ENCODE measurements at regions of chr1 and their contacts with region 1.

Region 1: DNA sequence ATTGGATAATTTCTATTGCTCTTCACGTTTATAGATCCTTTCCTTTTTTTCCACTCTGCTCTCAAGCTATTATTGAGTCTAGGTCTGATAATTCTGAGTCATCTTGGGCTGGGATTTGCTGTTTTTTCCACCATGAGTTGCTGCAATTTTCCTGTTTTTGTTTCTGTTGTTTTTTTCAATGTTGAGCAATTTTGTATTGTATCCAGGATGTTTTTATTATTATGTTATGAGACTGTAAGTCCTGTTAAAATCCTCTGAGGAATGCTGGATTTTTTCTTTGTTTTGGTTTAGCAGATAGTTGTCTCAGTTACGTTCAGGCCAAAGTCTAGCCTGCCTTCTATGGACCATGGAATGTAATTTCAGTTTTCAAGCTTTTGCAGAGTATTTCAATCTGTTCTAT is 13.0 kb upstream of the SLC35A3 start:
- DNase-seq: no peak
- H3K4me3 ChIP-seq: no peak overlapping the region
- H3K4me3 Mint-ChIP-seq: no peak overlapping the region
- H3K27ac ChIP-seq: no peak overlapping the region
- H3K27ac Mint-ChIP-seq: no peak overlapping the region
- H3K4me1 ChIP-seq: no peaks in the 10 kb centered on the region
- H3K4me1 Mint-ChIP-seq: no peaks in the 10 kb centered on the region
- H3K27me3 ChIP-seq: no peaks in the 10 kb centered on the region
- H3K27me3 Mint-ChIP-seq: peaks cover 0 to 1% of the 10 kb centered on the region in 2 donors

Region 2: GRCh38 chr1:99855914-99856450 is 100.8 kb before region 1 on chr1:
- CTCF ChIA-PET with region 1: no interaction called
- POLR2A ChIA-PET with region 1: no interaction called
- intact Hi-C with region 1: no loop called
- DNase-seq: no peak
- H3K4me3 ChIP-seq: no peak overlapping the region
- H3K4me3 Mint-ChIP-seq: no peak overlapping the region
- H3K27ac ChIP-seq: no peak overlapping the region
- H3K27ac Mint-ChIP-seq: no peak overlapping the region
- H3K4me1 ChIP-seq: peaks cover 6% of the 10 kb centered on the region
- H3K4me1 Mint-ChIP-seq: peaks cover 10 to 16% (median 14%) of the 10 kb centered on the region in 4 donors
- H3K27me3 ChIP-seq: no peaks in the 10 kb centered on the region
- H3K27me3 Mint-ChIP-seq: no peaks in the 10 kb centered on the region

Region 3: DNA sequence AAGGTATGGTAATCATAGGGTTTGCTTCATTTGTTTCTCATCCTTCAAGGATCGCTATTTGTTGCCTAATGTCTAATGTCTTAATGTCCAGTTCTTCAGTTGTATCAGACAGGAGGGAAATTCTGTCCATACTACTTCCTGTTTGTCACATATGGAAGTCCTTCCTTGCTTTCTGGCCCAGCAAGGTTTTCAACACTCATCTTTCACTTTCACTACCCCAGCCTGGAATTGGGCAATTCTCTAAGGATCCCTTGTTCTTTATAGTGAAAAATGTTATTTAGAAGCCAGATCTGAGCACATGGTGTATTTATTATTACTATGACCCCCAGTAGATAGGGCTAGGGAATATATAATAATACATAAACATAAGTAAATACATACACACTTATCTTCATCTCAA is 37.5 kb before region 1 on chr1:
- CTCF ChIA-PET with region 1: no interaction called
- POLR2A ChIA-PET with region 1: no interaction called
- intact Hi-C with region 1: loop called (anchors 2 kb)
- DNase-seq: no peak
- H3K4me3 ChIP-seq: no peak overlapping the region
- H3K4me3 Mint-ChIP-seq: peak overlapping the region in 1 of 8 donors; percentile 27
- H3K27ac ChIP-seq: no peak overlapping the region
- H3K27ac Mint-ChIP-seq: peak overlapping the region in 1 of 7 donors; percentile 16
- H3K4me1 ChIP-seq: no peaks in the 10 kb centered on the region
- H3K4me1 Mint-ChIP-seq: no peaks in the 10 kb centered on the region
- H3K27me3 ChIP-seq: no peaks in the 10 kb centered on the region
- H3K27me3 Mint-ChIP-seq: no peaks in the 10 kb centered on the region

Measured in CD4-positive, alpha-beta memory T cell (primary cell).